GM12878 (cell line): ENCODE measurements at regions of chr6 and their contacts with region 1.

Region 1: GRCh38 chr6:145349950-145350510 is 385.3 kb downstream of the EPM2A start:
- DNase-seq: peak; percentile 72
- ATAC-seq: peak; percentile 82
- H3K4me3 ChIP-seq: peak overlapping the region; percentile 39; the same call in 1 of the 2 replicates
- H3K27ac ChIP-seq: peak overlapping the region; percentile 71
- H3K4me1 ChIP-seq: peaks cover 15% of the 10 kb centered on the region
- H3K27me3 ChIP-seq: no peaks in the 10 kb centered on the region
- CTCF ChIP-seq: no peak
- EP300 ChIP-seq: peak; percentile 67 to 81
- POLR2A ChIP-seq: peak; percentile 37; the same call in 1 of the 2 replicates
- RAD21 ChIP-seq: no peak

Region 2: GRCh38 chr6:145214570-145214969 is 135.5 kb before region 1 on chr6:
- CTCF ChIA-PET with region 1: no interaction called
- POLR2A ChIA-PET with region 1: no interaction called
- RAD21 ChIA-PET with region 1: interaction called, 4 read pairs
- SMC1A ChIA-PET with region 1: interaction called, 4 read pairs
- in situ Hi-C with region 1: no loop called
- intact Hi-C with region 1: loop called (anchors 5 kb)
- DNase-seq: no peak
- ATAC-seq: peak; percentile 55
- H3K4me3 ChIP-seq: no peak overlapping the region
- H3K27ac ChIP-seq: no peak overlapping the region
- H3K4me1 ChIP-seq: peaks cover 15% of the 10 kb centered on the region
- H3K27me3 ChIP-seq: no peaks in the 10 kb centered on the region
- CTCF ChIP-seq: peak; percentile 32 to 43 (median 37); a peak in 4 of 6 replicates
- EP300 ChIP-seq: no peak
- POLR2A ChIP-seq: no peak
- RAD21 ChIP-seq: peak; percentile 72

Region 3: DNA sequence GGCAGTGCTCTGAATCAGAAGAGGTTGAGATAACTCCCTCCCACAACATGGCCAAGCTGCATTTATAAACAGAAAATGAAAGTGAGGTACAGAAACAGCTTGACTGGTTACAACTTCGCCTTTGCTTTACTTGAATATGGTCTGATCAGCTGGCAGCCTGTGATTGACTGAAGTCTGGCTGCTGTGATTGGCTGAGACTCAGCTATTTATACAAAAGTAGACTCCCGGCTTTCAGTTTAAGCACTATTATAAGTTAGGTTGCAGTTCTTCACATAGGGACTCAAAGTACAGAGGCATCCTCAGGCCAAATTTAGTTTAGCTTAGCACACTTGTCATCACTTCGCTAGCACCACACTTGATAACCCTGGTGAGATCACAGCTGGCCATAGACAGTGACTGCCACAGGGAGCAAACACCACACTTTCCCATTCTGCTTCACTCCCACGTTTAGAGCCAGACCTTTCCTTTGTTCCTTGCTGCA is 22.7 kb after region 1 on chr6:
- CTCF ChIA-PET with region 1: interaction called, 4 read pairs
- POLR2A ChIA-PET with region 1: interaction called, 3 read pairs
- RAD21 ChIA-PET with region 1: interaction called, 15 read pairs
- SMC1A ChIA-PET with region 1: interaction called, 25 read pairs
- in situ Hi-C with region 1: no loop called
- intact Hi-C with region 1: no loop called
- DNase-seq: peak; percentile 52
- ATAC-seq: peak; percentile 98
- H3K4me3 ChIP-seq: peak overlapping the region; percentile 9; the same call in 1 of the 2 replicates
- H3K27ac ChIP-seq: peak overlapping the region; percentile 47; the same call in 1 of the 2 replicates
- H3K4me1 ChIP-seq: no peaks in the 10 kb centered on the region; the same call in 1 of the 2 replicates
- H3K27me3 ChIP-seq: no peaks in the 10 kb centered on the region
- CTCF ChIP-seq: no peak
- EP300 ChIP-seq: no peak
- POLR2A ChIP-seq: peak; percentile 50; the same call in 1 of the 2 replicates
- RAD21 ChIP-seq: no peak